ENCODE measurements at regions of chr5 and their contacts with region 1.

Region 1: DNA sequence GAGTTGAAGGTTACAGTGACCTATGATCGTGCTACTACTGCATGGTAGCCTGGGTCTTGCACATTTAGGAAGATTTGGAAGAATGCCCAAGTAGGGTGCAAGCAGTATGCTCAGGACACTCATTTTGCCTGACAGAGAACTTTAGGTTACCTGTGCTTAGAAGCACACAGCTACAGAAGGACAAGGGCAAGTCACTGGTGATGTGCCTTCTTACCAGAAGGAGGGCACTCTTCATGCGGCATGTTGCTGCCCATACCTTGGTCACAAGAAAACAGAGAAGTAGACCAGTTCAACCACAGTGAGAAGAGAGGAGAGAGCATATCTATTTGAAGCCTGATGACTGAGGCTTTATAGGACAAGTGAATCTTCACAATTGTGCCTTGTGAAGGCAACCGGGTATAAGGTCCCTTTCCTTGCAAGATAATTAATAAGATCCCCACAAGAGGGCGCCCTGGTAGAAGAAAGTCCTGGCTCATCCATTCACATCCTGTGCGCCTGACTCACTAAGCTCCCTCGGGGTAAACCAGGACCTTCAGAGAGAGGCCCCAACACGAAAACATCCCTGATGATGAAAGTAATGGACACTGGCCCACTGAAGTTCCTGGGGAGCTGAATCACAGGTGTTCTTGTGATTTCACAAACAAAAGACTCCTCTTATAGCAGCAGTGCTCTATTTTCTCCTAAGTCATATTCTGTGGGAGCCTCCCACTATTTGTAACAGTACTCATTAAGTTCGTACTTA is 38.1 kb upstream of the STARD4 start:
- DNase-seq: peak; percentile 88
- ATAC-seq: peak; percentile 91
- H3K4me3 Mint-ChIP-seq: no peak overlapping the region
- H3K27ac Mint-ChIP-seq: peak overlapping the region; percentile 63
- H3K4me1 Mint-ChIP-seq: peaks cover 25% of the 10 kb centered on the region
- H3K27me3 Mint-ChIP-seq: no peaks in the 10 kb centered on the region
- CTCF ChIP-seq: peak; percentile 75

Region 2: GRCh38 chr5:111461255-111461671 is 89.2 kb before region 1 on chr5:
- CTCF ChIA-PET with region 1: no interaction called
- POLR2A ChIA-PET with region 1: no interaction called
- intact Hi-C with region 1: no loop called
- DNase-seq: no peak
- ATAC-seq: no peak
- H3K4me3 Mint-ChIP-seq: no peak overlapping the region
- H3K27ac Mint-ChIP-seq: peak overlapping the region; percentile 35
- H3K4me1 Mint-ChIP-seq: peaks cover 22% of the 10 kb centered on the region
- H3K27me3 Mint-ChIP-seq: no peaks in the 10 kb centered on the region
- CTCF ChIP-seq: no peak

Region 3: GRCh38 chr5:111537141-111538024 is 13.1 kb before region 1 on chr5:
- CTCF ChIA-PET with region 1: interaction called, 58 read pairs
- POLR2A ChIA-PET with region 1: no interaction called
- intact Hi-C with region 1: no loop called
- DNase-seq: no peak
- ATAC-seq: no peak
- H3K4me3 Mint-ChIP-seq: no peak overlapping the region
- H3K27ac Mint-ChIP-seq: no peak overlapping the region
- H3K4me1 Mint-ChIP-seq: peaks cover 2% of the 10 kb centered on the region
- H3K27me3 Mint-ChIP-seq: peaks cover 14% of the 10 kb centered on the region
- CTCF ChIP-seq: no peak

Region 4: GRCh38 chr5:111697881-111698757 is 147.7 kb after region 1 on chr5:
- CTCF ChIA-PET with region 1: no interaction called
- POLR2A ChIA-PET with region 1: no interaction called
- intact Hi-C with region 1: no loop called
- DNase-seq: peak; percentile 14
- ATAC-seq: no peak
- H3K4me3 Mint-ChIP-seq: no peak overlapping the region
- H3K27ac Mint-ChIP-seq: no peak overlapping the region
- H3K4me1 Mint-ChIP-seq: no peaks in the 10 kb centered on the region
- H3K27me3 Mint-ChIP-seq: no peaks in the 10 kb centered on the region
- CTCF ChIP-seq: no peak

Region 5: DNA sequence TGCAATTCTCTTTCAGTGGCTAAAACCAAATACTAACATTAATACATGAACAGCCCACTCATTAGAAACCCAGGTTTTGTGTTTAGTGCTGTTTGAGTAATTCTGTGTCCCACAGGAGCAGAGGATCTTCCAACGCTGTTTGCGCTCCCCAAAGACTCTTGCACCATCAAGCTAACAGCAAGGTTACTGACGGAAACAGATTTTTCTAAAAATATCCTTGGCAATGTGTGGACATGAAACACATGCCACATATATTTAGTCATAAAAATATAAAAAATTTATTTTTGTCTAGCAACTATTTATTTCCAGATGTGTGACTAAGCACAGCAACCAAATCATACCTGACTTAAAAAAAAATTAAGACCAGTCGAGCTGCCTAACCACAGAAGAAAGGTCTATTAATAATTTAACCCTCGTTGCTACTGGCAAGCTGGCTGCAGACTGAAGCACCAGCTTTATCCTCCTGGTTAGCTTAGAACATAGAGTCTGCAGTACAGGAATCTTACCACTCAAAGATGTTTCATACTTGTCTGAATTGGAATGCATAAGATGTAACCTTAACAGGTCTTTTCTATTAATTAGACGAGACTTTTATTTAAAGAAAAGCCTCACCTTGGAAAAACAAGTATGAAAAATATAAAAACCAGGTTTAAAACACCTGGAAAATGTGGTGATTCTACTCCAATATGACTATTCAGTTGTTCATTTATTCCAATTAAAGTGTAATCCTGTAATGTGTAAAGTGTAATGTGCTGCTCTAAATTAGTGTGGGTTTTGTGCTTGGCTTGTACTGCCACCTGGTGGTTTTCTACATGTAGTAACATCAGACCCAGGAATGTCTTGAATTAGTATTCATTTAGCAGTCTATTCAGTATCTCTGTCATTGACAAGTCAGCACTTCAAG is 596.1 kb after region 1 on chr5:
- CTCF ChIA-PET with region 1: interaction called, 23 read pairs
- POLR2A ChIA-PET with region 1: no interaction called
- intact Hi-C with region 1: loop called (anchors 1 kb)
- DNase-seq: peak; percentile 77
- ATAC-seq: peak; percentile 90
- H3K4me3 Mint-ChIP-seq: no peak overlapping the region
- H3K27ac Mint-ChIP-seq: no peak overlapping the region
- H3K4me1 Mint-ChIP-seq: no peaks in the 10 kb centered on the region
- H3K27me3 Mint-ChIP-seq: peaks cover 3% of the 10 kb centered on the region
- CTCF ChIP-seq: peak; percentile 80

Region 6: DNA sequence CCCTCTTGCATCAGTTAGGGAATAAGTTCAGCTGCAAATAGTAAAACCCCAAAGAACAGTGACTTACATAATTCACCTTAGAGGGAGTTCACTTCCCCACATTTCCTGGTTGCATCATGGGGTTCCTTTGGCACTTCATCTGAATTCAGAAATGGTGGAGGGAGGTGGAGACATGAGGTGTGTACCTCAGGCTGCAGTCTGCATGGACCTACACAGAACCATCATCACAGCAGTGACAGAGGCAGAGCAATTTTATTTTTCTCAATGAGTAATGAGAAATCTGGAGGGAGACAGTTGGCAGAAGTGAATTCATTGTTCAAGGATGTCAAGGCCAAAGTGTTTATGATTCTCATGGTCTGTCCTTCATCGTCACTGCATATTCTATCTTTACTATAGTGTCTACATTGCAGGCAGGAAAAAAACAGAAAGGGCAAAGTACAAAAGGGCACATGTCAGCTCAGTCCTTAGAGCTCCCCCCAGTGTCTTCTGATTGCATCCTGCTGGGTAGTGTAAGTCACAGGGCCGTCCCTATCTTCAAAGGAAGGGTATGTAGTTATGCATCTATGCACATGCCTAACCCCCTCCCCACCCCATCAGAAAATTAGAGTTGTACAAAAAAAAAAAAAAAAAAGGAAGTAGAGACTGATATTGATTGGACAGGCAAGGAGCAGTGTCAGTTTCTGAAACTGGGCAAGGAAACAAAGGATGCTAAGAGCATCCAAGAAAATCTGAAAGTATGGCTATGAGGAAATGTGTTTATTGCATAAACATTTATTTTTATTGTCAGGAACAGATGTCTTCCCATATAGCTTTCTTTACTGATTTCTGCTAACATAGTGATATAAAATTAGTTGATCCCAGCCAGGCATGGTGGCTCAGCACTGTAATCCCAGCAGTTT is 1054.5 kb after region 1 on chr5:
- CTCF ChIA-PET with region 1: no interaction called
- POLR2A ChIA-PET with region 1: no interaction called
- intact Hi-C with region 1: no loop called
- DNase-seq: peak; percentile 19
- ATAC-seq: peak; percentile 60
- H3K4me3 Mint-ChIP-seq: no peak overlapping the region
- H3K27ac Mint-ChIP-seq: no peak overlapping the region
- H3K4me1 Mint-ChIP-seq: no peaks in the 10 kb centered on the region
- H3K27me3 Mint-ChIP-seq: peaks cover 5% of the 10 kb centered on the region
- CTCF ChIP-seq: no peak